SK-N-SH (cell line): ENCODE measurements at regions of chr4 and their contacts with region 1.

Region 1: GRCh38 chr4:122716825-122717448 is 15.6 kb upstream of the BBS12 start:
- DNase-seq: peak; percentile 67
- H3K4me3 ChIP-seq: no peak overlapping the region; a peak in 1 of 4 replicates
- H3K27ac ChIP-seq: no peak overlapping the region
- H3K4me1 ChIP-seq: peaks cover 0 to 3% of the 10 kb centered on the region in 2 experiments; a peak in 2 of 4 replicates
- H3K27me3 ChIP-seq: no peaks in the 10 kb centered on the region
- CTCF ChIP-seq: peak; percentile 97
- EP300 ChIP-seq: no peak
- RAD21 ChIP-seq: peak; percentile 77

Region 2: DNA sequence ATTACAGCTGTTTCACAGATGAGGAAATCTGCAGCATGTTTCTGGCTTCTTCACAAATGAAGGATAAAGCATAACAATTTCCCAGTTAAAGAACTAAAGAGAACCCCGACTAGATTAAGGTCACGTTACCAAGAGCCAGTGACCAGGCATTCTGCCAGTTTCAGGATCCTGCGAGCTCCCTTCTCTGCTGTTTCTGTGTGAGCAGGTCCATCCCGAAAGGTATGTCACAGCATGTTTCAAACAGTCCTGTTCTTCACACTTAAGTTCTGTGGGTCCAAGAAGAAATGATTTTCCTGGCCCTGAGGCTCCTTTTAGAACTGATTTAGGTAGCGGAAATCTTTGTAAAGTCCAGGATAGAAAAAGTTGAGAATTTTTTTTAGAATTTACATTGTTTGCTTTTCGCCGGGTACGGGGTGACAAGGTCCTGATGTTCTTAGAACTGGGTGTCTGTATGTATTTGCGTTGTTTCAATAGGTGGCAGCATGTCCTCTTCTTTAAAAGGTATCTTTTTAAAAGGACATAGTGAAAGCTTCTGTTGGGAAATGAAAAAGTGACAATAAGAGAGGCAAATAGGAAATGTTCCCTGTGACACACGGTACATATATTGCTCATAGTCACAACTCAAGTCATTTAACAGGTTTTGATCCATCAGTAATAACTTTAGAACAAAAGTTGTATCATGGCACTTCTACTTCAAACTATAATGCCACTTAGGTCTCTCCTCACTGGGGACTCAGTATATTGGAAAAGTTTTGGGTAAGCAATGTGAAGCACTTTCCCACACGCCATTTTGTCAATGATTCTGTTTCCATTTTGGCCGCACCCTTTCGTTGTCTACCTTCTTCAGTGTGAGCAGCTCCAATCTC is 114.4 kb before region 1 on chr4:
- CTCF ChIA-PET with region 1: interaction called, 10 read pairs
- POLR2A ChIA-PET with region 1: no interaction called
- DNase-seq: peak; percentile 8
- H3K4me3 ChIP-seq: peak overlapping the region; percentile 18 to 24; a peak in 2 of 4 replicates
- H3K27ac ChIP-seq: no peak overlapping the region
- H3K4me1 ChIP-seq: no peaks in the 10 kb centered on the region; a peak in 1 of 4 replicates
- H3K27me3 ChIP-seq: no peaks in the 10 kb centered on the region
- CTCF ChIP-seq: peak; percentile 68
- EP300 ChIP-seq: no peak
- RAD21 ChIP-seq: peak; percentile 69

Region 3: GRCh38 chr4:122732329-122733026 is 15.5 kb after region 1 on chr4 and contains the start of gene BBS12:
- CTCF ChIA-PET with region 1: interaction called, 12 read pairs
- POLR2A ChIA-PET with region 1: no interaction called
- DNase-seq: peak; percentile 95
- H3K4me3 ChIP-seq: peak within 1 kb of the TSS; percentile 70 to 88
- H3K27ac ChIP-seq: peak within 1 kb of the TSS; percentile 77 to 94
- H3K4me1 ChIP-seq: peaks cover 0 to 8% of the 10 kb centered on the region in 2 experiments; a peak in 3 of 4 replicates
- H3K27me3 ChIP-seq: no peaks in the 10 kb centered on the region
- CTCF ChIP-seq: peak; percentile 58
- EP300 ChIP-seq: no peak
- RAD21 ChIP-seq: peak; percentile 51
- polyA plus RNA-seq, gene BBS12: 1.5 and 2.1 TPM in 2 replicates

Region 4: GRCh38 chr4:122814426-122814825 is 97.5 kb after region 1 on chr4:
- CTCF ChIA-PET with region 1: no interaction called
- POLR2A ChIA-PET with region 1: no interaction called
- DNase-seq: no peak
- H3K4me3 ChIP-seq: no peak overlapping the region
- H3K27ac ChIP-seq: no peak overlapping the region
- H3K4me1 ChIP-seq: no peaks in the 10 kb centered on the region
- H3K27me3 ChIP-seq: no peaks in the 10 kb centered on the region
- CTCF ChIP-seq: no peak
- EP300 ChIP-seq: no peak
- RAD21 ChIP-seq: no peak